ENCODE measurements at regions of chr7 and their contacts with region 1.

Region 1: DNA sequence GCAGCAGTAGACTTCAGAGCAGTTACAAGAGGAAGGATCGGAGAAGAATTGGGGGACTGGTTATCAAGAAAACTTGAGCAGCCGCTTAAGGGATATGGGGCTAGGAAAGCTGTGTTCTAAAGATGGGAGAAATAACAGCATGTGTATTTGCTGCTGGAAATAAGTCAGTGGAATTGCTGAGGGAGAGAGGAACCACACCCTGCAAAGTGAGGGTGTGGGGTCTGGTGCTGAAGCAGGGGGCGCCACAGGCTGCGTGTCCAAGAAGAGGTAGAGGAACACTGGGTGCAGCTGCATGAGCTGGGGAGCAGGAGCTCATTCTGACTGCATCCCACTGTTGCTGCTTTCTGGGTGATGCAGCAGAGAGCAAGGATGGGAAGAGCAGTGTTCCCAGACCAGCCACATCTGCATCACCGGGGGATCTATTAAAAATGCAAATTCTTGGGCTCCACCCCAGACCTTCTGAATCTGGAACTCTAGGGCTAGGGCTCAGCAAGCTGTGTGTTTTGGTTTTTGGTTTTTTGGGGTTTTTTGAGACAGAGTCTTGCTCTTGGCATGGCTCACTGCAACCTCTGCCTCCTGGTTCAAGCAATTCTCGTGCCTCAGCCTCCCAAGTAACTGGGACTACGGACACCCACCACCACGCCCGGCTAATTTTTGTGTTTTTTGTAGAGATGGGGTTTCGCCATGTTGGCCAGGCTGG is 97.1 kb upstream of the DNAJB6 start:
- DNase-seq: no peak
- H3K4me3 ChIP-seq: no peak overlapping the region
- H3K27ac ChIP-seq: no peak overlapping the region
- H3K4me1 ChIP-seq: no peaks in the 10 kb centered on the region
- H3K27me3 ChIP-seq: no peaks in the 10 kb centered on the region
- CTCF ChIP-seq: no peak
- POLR2A ChIP-seq: no peak

Region 2: GRCh38 chr7:157250605-157251228 is 11.0 kb after region 1 on chr7:
- intact Hi-C with region 1: loop called (anchors 1 kb)
- DNase-seq: no peak
- H3K4me3 ChIP-seq: no peak overlapping the region
- H3K27ac ChIP-seq: no peak overlapping the region
- H3K4me1 ChIP-seq: no peaks in the 10 kb centered on the region
- H3K27me3 ChIP-seq: no peaks in the 10 kb centered on the region
- CTCF ChIP-seq: peak; percentile 43 to 61 (median 61)
- POLR2A ChIP-seq: no peak

Region 3: GRCh38 chr7:157267516-157267915 is 27.8 kb after region 1 on chr7:
- intact Hi-C with region 1: no loop called
- DNase-seq: no peak
- H3K4me3 ChIP-seq: no peak overlapping the region
- H3K27ac ChIP-seq: no peak overlapping the region
- H3K4me1 ChIP-seq: peaks cover 0 to 3% of the 10 kb centered on the region in 2 donors
- H3K27me3 ChIP-seq: no peaks in the 10 kb centered on the region
- CTCF ChIP-seq: no peak
- POLR2A ChIP-seq: no peak

Region 4: DNA sequence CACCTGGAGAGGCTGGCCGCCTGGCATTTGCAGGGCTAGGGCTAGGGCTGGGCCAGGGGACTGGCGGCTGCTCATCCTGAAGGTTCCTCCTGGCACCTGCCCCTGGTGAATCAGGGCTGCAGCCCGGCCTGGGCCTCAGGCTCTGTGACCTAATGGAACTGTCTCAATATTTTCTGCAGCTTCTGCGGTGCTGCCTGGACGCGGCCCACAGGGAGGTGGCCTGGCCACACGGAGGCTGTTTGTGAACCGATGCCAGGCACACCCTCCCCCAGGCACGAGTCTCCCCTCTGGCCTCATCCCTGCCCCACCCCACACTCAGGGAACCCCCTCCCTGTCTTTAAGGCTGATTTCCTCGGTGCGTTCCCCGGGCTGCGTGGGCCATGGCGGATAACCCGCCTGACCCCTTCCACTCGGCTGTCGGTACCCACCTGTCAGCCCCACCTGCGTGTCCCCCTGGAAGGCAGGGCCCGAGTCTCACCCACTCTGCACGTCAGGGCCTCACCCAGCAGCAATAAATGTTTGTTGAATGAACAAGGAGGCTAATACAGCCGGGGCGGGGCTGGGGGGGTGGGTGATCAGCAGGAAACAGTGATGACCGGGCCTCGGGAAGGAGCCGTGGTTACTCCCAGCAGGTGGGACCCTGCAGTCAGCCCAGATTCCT is 42.5 kb after region 1 on chr7:
- intact Hi-C with region 1: loop called (anchors 2 kb)
- DNase-seq: no peak
- H3K4me3 ChIP-seq: no peak overlapping the region
- H3K27ac ChIP-seq: peak overlapping the region in 1 of 2 donors; percentile 14
- H3K4me1 ChIP-seq: no peaks in the 10 kb centered on the region
- H3K27me3 ChIP-seq: no peaks in the 10 kb centered on the region
- CTCF ChIP-seq: no peak
- POLR2A ChIP-seq: no peak

Measured in breast epithelium (tissue), 4 donors.